ENCODE measurements at regions of chr15 and their contacts with region 1.

Region 1: GRCh38 chr15:40412095-40412759 is 6.6 kb downstream of the IVD start:
- DNase-seq: peak; percentile 70 to 77
- ATAC-seq: peak; percentile 98

Region 2: GRCh38 chr15:40367686-40368611 is 44.3 kb before region 1 on chr15:
- intact Hi-C with region 1: loop called in 1 of 2 experiments (anchors 10 kb)
- DNase-seq: peak; percentile 88 to 91
- ATAC-seq: peak; percentile 87

Region 3: DNA sequence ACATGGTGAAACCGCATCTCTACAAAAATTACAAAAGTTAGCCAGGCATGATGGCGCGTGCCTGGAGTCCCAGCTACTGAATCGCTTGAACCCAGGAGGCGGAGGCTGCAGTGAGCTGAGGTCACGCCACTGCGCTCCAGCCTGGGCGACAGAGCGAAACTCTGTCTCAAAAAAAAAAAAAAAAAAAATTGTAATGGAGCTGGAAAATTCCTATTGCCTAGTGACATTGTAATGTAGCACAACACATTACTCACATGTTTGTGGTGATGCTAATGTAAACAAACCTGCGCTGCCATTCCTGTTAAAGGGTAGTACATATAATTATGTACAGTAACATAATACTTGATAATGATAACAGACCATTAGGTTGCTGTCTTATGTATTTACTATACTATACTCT is 220.9 kb after region 1 on chr15:
- intact Hi-C with region 1: no loop called
- DNase-seq: no peak
- ATAC-seq: no peak

Measured in left colon (tissue), 2 donors.